Stomach (tissue), 19 donors: ENCODE measurements at regions of chr1 and their contacts with region 1.

Region 1: DNA sequence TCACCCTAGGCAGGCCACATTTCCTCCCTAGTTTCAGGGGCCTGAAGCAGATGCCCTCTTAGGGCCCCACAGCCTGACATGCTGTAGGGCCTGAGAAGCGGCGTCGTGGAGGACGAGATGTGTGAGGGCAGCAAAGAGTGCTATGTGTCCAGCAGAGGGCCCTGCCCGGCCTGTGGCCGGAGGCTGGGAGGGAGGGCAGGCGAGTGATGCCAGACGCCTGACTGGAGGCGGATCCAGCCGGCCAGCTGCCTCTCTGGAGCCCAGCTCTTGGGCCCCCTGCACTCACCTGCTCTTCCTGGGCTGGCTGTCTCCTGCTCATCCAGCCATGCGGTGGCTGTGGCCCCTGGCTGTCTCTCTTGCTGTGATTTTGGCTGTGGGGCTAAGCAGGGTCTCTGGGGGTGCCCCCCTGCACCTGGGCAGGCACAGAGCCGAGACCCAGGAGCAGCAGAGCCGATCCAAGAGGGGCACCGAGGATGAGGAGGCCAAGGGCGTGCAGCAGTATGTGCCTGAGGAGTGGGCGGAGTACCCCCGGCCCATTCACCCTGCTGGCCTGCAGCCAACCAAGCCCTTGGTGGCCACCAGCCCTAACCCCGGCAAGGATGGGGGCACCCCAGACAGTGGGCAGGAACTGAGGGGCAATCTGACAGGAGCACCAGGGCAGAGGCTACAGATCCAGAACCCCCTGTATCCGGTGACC is at the start of gene GPR37L1:
- DNase-seq: peak; percentile 77 to 79
- H3K4me3 ChIP-seq: no peak within 1 kb of the TSS
- H3K27ac ChIP-seq: no peak within 1 kb of the TSS
- H3K4me1 ChIP-seq: peaks cover 0 to 20% (median 8%) of the 10 kb centered on the region in 4 donors
- H3K27me3 ChIP-seq: no peaks in the 10 kb centered on the region
- CTCF ChIP-seq: peak in 5 of 7 experiments; percentile 23 to 49 (median 40)
- EP300 ChIP-seq: no peak
- POLR2A ChIP-seq: no peak
- total RNA-seq, gene GPR37L1: under 0.01 to 2.0 (median 0.45) TPM in 4 of 5 donors, not detected in the other

Region 2: GRCh38 chr1:201904579-201904978 is 218.2 kb before region 1 on chr1:
- intact Hi-C with region 1: loop called (anchors 10 kb)
- DNase-seq: peak in 1 of 2 donors; percentile 86
- H3K4me3 ChIP-seq: no peak overlapping the region
- H3K27ac ChIP-seq: peak overlapping the region; percentile 1 to 90 (median 74)
- H3K4me1 ChIP-seq: peaks cover 0 to 87% (median 49%) of the 10 kb centered on the region in 4 donors
- H3K27me3 ChIP-seq: no peaks in the 10 kb centered on the region
- CTCF ChIP-seq: no peak
- EP300 ChIP-seq: no peak
- POLR2A ChIP-seq: no peak

Region 3: GRCh38 chr1:201999625-202000238 is 123.1 kb before region 1 on chr1:
- intact Hi-C with region 1: loop called (anchors 5 kb)
- DNase-seq: peak; percentile 55 to 87
- H3K4me3 ChIP-seq: no peak overlapping the region
- H3K27ac ChIP-seq: no peak overlapping the region
- H3K4me1 ChIP-seq: no peaks in the 10 kb centered on the region
- H3K27me3 ChIP-seq: no peaks in the 10 kb centered on the region
- CTCF ChIP-seq: peak in 5 of 7 experiments; percentile 57 to 80 (median 62)
- EP300 ChIP-seq: no peak
- POLR2A ChIP-seq: no peak